Ovary (tissue), 10 donors: ENCODE measurements at regions of chr17 and their contacts with region 1.

Region 1: GRCh38 chr17:7834962-7835813 is 1.2 kb downstream of the KDM6B start:
- DNase-seq: peak; percentile 98 to 99 (median 99)
- H3K4me3 ChIP-seq: peak overlapping the region; percentile 95
- H3K27ac ChIP-seq: peak overlapping the region; percentile 97 to 99
- H3K4me1 ChIP-seq: peaks cover 16% of the 10 kb centered on the region
- H3K27me3 ChIP-seq: no peaks in the 10 kb centered on the region
- CTCF ChIP-seq: peak; percentile 77 to 94 (median 91)
- EP300 ChIP-seq: peak; percentile 63
- POLR2A ChIP-seq: peak; percentile 95

Region 2: DNA sequence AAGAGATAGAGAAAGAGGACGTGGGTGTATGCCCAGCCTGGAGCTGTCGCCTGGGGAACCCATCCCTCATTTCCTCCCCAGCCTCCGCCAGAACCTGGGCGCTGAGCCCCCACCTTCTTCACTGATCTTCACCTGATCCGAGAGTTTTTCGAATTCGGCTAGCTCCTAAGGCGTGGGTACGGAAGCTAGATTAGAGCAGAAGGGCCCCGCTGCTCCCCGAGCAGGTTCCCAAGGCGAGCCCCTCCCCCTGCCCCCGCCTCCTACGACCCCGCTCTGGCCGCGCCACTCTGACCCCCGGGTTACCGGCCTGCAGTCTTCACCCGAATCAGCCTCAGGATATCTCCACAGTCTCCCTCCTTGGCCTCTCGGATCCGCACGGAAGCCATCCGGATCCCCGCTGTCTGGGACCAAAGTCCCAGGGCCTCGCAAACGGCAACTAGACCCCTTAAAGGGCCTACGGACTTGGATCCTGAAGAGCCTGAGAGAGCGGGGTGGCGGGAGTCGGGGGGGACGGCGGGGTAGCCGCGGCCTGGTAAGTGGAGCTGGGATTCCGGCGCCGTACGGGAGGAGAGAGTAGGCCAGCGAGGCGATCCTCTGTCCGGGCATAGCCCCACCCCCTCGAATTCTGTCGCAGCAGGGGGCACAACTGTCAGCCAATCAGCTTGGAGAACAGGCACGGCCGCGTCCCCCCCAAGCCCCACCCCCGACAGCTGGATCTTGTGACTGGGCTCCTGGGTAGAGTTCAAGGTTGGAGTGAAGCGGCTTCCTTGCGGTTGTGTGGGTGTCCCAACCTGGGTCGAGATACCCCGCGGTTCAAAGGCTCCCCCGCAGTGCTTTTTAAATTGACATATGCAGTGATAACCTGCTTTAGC is 207.7 kb before region 1 on chr17 and contains the start of gene SAT2:
- intact Hi-C with region 1: loop called in 1 of 4 experiments (anchors 10 kb)
- DNase-seq: peak; percentile 95 to 98 (median 97)
- H3K4me3 ChIP-seq: peak within 1 kb of the TSS; percentile 92
- H3K27ac ChIP-seq: peak within 1 kb of the TSS; percentile 89 to 97
- H3K4me1 ChIP-seq: peaks cover 8% of the 10 kb centered on the region
- H3K27me3 ChIP-seq: no peaks in the 10 kb centered on the region
- CTCF ChIP-seq: peak in 1 of 3 donors; percentile 19
- EP300 ChIP-seq: no peak
- POLR2A ChIP-seq: peak; percentile 83
- total RNA-seq, gene SAT2: 89.5 to 195 (median 145) TPM

Region 3: GRCh38 chr17:7887482-7888183 is 52.4 kb after region 1 on chr17:
- intact Hi-C with region 1: no loop called
- DNase-seq: peak; percentile 89 to 93 (median 92)
- H3K4me3 ChIP-seq: peak overlapping the region; percentile 75
- H3K27ac ChIP-seq: peak overlapping the region; percentile 95 to 98
- H3K4me1 ChIP-seq: peaks cover 18% of the 10 kb centered on the region
- H3K27me3 ChIP-seq: no peaks in the 10 kb centered on the region
- CTCF ChIP-seq: no peak
- EP300 ChIP-seq: no peak
- POLR2A ChIP-seq: no peak